ENCODE measurements at regions of chr5 and their contacts with region 1.

Region 1: DNA sequence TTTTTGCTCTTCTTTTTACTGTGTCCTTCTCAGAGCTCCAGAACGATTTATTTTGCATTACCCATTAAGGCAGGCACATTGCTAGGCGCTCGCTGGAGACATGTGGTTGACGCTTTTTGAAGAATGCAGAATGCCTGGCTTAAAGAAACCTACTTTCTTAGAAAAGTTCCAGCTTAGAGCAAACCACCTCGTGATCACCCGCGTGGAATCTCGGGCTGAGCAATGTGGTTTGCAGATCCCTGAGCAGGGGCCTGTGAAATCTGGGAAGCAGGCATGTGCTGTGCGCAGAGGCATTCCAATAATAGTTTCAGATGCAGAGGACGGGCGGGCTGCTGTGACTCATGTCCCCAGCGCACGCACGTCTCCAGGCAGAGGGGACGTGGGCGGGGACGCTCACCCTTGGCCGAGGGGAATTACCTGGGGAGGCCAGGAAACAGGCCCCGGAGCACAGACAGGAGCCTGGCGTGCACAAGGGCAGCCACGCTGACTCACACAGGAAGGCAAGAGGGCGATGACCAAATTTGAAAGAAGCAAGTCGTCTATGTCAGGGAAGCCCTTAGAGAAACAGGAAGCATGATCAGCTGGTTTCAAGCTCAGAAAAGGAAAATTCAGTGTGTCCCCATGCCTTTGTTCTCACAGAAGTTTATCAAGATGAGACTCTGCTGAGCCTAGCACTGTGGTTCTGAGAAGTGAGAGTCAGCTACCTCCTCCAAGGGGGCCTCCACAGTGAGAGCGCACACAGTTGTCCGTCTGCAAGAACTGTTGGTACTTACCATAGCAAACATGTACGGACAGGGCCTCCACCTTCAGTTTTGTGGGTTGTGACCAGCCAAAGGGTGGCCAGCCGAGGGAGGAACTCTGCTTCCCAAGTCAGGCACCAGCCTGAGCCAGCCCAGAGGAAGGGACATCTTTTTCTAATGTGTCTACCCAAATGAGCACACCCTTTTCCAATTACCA is 218.6 kb downstream of the PIK3R1 start:
- DNase-seq: peak; percentile 99
- ATAC-seq: peak; percentile 96
- H3K4me3 ChIP-seq: no peak overlapping the region
- H3K27ac ChIP-seq: peak overlapping the region; percentile 97
- H3K4me1 ChIP-seq: peaks cover 58% of the 10 kb centered on the region
- H3K27me3 ChIP-seq: no peaks in the 10 kb centered on the region
- CTCF ChIP-seq: no peak
- EP300 ChIP-seq: peak; percentile 72 to 82; a peak in 3 of 4 replicates
- POLR2A ChIP-seq: peak; percentile 24; the same call in 1 of the 2 replicates
- RAD21 ChIP-seq: peak; percentile 33

Region 2: GRCh38 chr5:68303038-68303738 is 131.0 kb before region 1 on chr5:
- CTCF ChIA-PET with region 1: no interaction called
- POLR2A ChIA-PET with region 1: interaction called, 3 read pairs
- RAD21 ChIA-PET with region 1: interaction called, 3 read pairs
- SMC1A ChIA-PET with region 1: interaction called, 6 read pairs
- in situ Hi-C with region 1: no loop called
- intact Hi-C with region 1: loop called (anchors 1 kb)
- DNase-seq: peak; percentile 55
- ATAC-seq: peak; percentile 73
- H3K4me3 ChIP-seq: no peak overlapping the region
- H3K27ac ChIP-seq: no peak overlapping the region
- H3K4me1 ChIP-seq: peaks cover 13% of the 10 kb centered on the region; the same call in 1 of the 2 replicates
- H3K27me3 ChIP-seq: no peaks in the 10 kb centered on the region
- CTCF ChIP-seq: no peak
- EP300 ChIP-seq: no peak
- POLR2A ChIP-seq: no peak
- RAD21 ChIP-seq: no peak

Region 3: DNA sequence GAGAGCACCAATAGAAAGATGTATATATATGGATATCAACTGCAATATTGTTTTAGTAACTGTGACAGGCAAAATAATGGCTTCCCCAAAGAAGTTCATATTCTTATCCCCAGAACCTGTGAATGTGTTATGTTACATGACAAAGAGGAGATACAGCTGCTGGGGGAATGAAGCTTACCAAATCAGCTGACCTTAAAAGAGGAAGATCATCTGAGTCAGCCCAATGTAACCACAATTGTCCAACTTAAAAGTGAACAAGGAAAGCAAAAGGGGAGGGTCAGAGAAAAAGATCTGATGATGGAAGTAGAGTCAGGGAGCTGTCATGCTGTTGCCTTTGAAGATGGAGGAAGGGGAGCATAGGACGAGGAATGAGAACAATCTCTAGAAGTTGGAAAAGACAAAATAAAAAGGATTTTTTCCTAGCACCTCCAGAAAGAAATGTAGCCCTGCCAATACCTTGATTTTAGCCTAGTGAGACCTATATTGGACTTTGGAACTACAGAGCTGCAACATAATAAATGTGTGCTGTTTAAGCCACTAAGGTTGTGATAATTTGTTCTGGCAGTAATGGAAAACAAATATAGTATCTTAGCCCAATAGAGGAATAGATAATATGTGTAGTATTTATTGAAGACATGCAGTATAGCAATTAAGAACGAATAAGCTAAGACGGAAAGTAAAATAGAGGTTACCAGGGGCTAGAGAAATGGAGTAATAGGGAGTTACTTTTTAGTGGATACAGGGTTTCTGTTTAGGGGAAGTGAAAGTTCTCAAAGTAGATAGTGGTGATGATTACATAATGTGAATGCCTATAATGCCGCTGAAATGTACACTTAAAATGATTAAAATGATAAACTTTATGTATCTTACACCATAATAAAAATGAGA is 102.8 kb before region 1 on chr5:
- CTCF ChIA-PET with region 1: interaction called, 6 read pairs
- POLR2A ChIA-PET with region 1: interaction called, 9 read pairs
- RAD21 ChIA-PET with region 1: interaction called, 25 read pairs
- SMC1A ChIA-PET with region 1: interaction called, 24 read pairs
- in situ Hi-C with region 1: no loop called
- intact Hi-C with region 1: no loop called
- DNase-seq: no peak
- ATAC-seq: peak; percentile 97
- H3K4me3 ChIP-seq: no peak overlapping the region
- H3K27ac ChIP-seq: no peak overlapping the region
- H3K4me1 ChIP-seq: peaks cover 11% of the 10 kb centered on the region
- H3K27me3 ChIP-seq: no peaks in the 10 kb centered on the region
- CTCF ChIP-seq: no peak
- EP300 ChIP-seq: peak in 1 of 2 experiments; percentile 63; a peak in 1 of 4 replicates
- POLR2A ChIP-seq: no peak
- RAD21 ChIP-seq: no peak

Region 4: GRCh38 chr5:68369457-68370125 is 64.6 kb before region 1 on chr5:
- CTCF ChIA-PET with region 1: interaction called, 3 read pairs
- POLR2A ChIA-PET with region 1: interaction called, 4 read pairs
- RAD21 ChIA-PET with region 1: interaction called, 4 read pairs
- SMC1A ChIA-PET with region 1: interaction called, 19 read pairs
- in situ Hi-C with region 1: no loop called
- intact Hi-C with region 1: no loop called
- DNase-seq: peak; percentile 54
- ATAC-seq: peak; percentile 92
- H3K4me3 ChIP-seq: peak overlapping the region; percentile 19; the same call in 1 of the 2 replicates
- H3K27ac ChIP-seq: peak overlapping the region; percentile 60
- H3K4me1 ChIP-seq: peaks cover 42% of the 10 kb centered on the region
- H3K27me3 ChIP-seq: no peaks in the 10 kb centered on the region
- CTCF ChIP-seq: no peak
- EP300 ChIP-seq: peak; percentile 40 to 80; a peak in 2 of 4 replicates
- POLR2A ChIP-seq: no peak
- RAD21 ChIP-seq: 0 out of 2 replicates have a peak, but pooled peaks have one; percentile 18

Region 5: DNA sequence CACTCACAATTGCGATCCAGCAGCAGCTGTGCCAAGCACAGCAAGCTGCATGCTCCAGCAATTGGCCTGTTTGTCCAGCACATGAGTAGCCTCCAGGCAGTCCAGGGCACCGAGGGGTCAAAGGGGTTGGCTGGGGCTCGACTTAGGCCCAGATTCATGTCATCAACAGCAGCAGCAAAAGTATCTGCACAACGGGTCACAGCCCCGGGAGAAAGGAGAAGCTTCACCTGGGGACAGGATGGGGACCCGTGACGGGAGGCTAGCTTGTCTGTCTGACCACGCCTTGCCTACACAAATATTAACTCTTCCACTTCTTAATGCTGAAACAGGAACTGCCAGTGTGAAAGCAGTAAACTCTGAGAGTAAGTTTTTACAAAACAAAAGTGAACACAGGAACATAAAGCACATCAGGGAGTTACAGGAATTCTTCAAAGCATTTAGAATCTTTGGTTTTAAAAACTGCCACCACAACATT is 27.4 kb before region 1 on chr5:
- CTCF ChIA-PET with region 1: interaction called, 3 read pairs
- POLR2A ChIA-PET with region 1: interaction called, 3 read pairs
- RAD21 ChIA-PET with region 1: interaction called, 14 read pairs
- SMC1A ChIA-PET with region 1: interaction called, 9 read pairs
- in situ Hi-C with region 1: no loop called
- intact Hi-C with region 1: no loop called
- DNase-seq: peak; percentile 26
- ATAC-seq: peak; percentile 95
- H3K4me3 ChIP-seq: no peak overlapping the region; the same call in 1 of the 2 replicates
- H3K27ac ChIP-seq: peak overlapping the region; percentile 10; the same call in 1 of the 2 replicates
- H3K4me1 ChIP-seq: peaks cover 5% of the 10 kb centered on the region
- H3K27me3 ChIP-seq: no peaks in the 10 kb centered on the region
- CTCF ChIP-seq: no peak
- EP300 ChIP-seq: no peak
- POLR2A ChIP-seq: no peak
- RAD21 ChIP-seq: no peak

Region 6: DNA sequence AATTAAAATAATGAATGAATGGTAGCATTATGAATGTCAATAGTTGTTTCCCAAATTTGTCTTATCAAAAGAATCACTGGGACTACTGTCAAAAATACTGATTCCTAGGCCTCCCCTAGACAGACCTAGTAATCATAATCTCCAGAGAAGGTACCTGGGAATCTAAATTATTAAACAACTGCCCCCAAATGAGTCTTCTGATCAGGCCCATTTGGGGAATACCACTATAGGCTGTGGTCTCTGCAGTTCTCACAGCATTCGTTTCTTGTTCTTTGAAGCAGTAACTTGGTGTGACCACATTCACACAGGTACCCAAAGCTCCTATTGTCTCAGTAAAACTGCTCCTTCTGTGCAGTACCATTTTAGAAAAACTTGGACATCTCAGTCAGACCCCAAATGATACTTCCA is 12.3 kb after region 1 on chr5:
- CTCF ChIA-PET with region 1: interaction called, 97 read pairs
- POLR2A ChIA-PET with region 1: interaction called, 69 read pairs
- RAD21 ChIA-PET with region 1: interaction called, 190 read pairs
- SMC1A ChIA-PET with region 1: interaction called, 266 read pairs
- in situ Hi-C with region 1: no loop called
- intact Hi-C with region 1: loop called (anchors 1 kb)
- DNase-seq: peak; percentile 87
- ATAC-seq: peak; percentile 94
- H3K4me3 ChIP-seq: no peak overlapping the region
- H3K27ac ChIP-seq: peak overlapping the region; percentile 77
- H3K4me1 ChIP-seq: peaks cover 21% of the 10 kb centered on the region
- H3K27me3 ChIP-seq: no peaks in the 10 kb centered on the region
- CTCF ChIP-seq: no peak
- EP300 ChIP-seq: peak; percentile 60 to 84; a peak in 3 of 4 replicates
- POLR2A ChIP-seq: no peak
- RAD21 ChIP-seq: peak; percentile 34

Region 7: DNA sequence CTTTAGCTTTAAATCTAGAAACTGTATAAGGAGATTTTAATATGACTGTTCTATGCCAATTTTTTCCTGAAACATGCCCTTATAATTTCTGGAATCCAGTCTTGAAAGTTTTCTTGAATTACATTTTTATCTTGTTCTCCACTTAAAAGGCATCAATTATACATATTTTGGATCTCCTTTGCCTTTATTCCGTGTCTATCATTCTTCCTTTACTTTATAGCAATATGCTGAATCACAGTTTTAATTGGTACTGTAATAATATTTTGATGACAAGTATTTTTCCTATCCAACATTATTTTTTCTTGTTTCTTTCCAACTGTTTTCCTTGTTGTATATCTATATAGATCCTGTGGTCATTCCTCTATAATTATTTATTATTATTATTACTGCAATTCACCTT is 142.6 kb after region 1 on chr5:
- CTCF ChIA-PET with region 1: no interaction called
- POLR2A ChIA-PET with region 1: no interaction called
- RAD21 ChIA-PET with region 1: no interaction called
- SMC1A ChIA-PET with region 1: no interaction called
- in situ Hi-C with region 1: no loop called
- intact Hi-C with region 1: no loop called
- DNase-seq: no peak
- ATAC-seq: no peak
- H3K4me3 ChIP-seq: no peak overlapping the region
- H3K27ac ChIP-seq: no peak overlapping the region
- H3K4me1 ChIP-seq: no peaks in the 10 kb centered on the region
- H3K27me3 ChIP-seq: no peaks in the 10 kb centered on the region
- CTCF ChIP-seq: no peak
- EP300 ChIP-seq: no peak
- POLR2A ChIP-seq: no peak
- RAD21 ChIP-seq: no peak

Measured in GM12878 (cell line).